Calu3 (cell line): ENCODE measurements at regions of chr7 and their contacts with region 1.

Region 1: GRCh38 chr7:45157653-45158401 is at the start of gene RAMP3:
- DNase-seq: no peak
- H3K4me3 Mint-ChIP-seq: no peak within 1 kb of the TSS
- H3K27ac Mint-ChIP-seq: no peak within 1 kb of the TSS
- H3K4me1 Mint-ChIP-seq: no peaks in the 10 kb centered on the region
- H3K27me3 Mint-ChIP-seq: peaks cover 71% of the 10 kb centered on the region
- CTCF ChIP-seq: no peak
- total RNA-seq, gene RAMP3: not detected in 2 replicates

Region 2: DNA sequence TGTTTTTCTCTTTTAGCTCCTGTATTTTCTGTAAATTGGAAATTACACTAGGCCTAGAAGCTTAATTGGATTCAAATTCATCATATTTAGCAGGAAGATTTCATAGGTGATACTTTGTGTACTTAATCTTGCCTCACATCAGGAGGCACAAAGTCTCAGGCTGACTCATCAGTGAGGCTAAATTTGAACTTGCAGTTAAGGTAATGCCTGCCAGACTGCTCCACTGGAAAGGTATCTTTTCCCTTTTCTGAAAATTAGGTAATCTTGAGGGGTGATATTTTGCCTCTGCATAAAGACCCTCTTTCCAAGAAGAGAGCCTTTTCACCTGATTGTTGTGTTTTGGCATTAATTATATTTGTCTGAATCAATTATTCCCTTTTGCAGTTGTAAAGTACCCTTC is 346.7 kb before region 1 on chr7:
- CTCF ChIA-PET with region 1: no interaction called
- intact Hi-C with region 1: no loop called
- DNase-seq: peak; percentile 45
- H3K4me3 Mint-ChIP-seq: no peak overlapping the region
- H3K27ac Mint-ChIP-seq: no peak overlapping the region
- H3K4me1 Mint-ChIP-seq: no peaks in the 10 kb centered on the region
- H3K27me3 Mint-ChIP-seq: no peaks in the 10 kb centered on the region
- CTCF ChIP-seq: no peak

Region 3: DNA sequence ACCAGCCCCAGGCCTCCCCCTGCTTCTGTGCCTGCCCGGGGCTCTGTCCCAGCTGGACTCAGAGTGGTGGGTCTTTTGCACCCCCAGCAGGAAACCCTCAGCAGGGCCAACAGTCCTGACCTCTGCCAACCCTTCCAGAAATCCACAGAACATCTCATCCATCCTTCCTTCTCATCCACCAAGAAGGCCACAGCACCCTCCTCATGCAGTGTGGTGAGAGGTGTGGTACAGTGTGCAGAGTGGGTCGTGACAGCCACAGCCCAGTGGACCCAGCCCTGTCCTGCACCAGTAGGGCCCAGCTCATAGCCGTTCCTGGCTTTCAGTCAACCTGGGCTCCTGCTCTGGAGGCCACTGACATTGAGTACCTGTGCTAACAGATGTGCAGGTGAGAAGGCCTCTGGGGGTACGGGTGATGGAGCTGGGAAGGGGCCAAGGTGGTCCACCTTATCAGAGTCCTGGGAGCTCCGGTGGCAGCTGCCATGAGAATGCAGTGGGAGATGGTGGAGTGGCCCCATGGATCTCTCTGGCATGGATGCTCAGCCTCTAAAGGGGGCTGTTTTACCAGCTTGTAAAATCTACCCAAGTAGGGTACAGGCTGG is 40.3 kb before region 1 on chr7:
- CTCF ChIA-PET with region 1: no interaction called
- intact Hi-C with region 1: no loop called
- DNase-seq: no peak
- H3K4me3 Mint-ChIP-seq: no peak overlapping the region
- H3K27ac Mint-ChIP-seq: no peak overlapping the region
- H3K4me1 Mint-ChIP-seq: no peaks in the 10 kb centered on the region
- H3K27me3 Mint-ChIP-seq: peaks cover 47% of the 10 kb centered on the region
- CTCF ChIP-seq: no peak

Region 4: DNA sequence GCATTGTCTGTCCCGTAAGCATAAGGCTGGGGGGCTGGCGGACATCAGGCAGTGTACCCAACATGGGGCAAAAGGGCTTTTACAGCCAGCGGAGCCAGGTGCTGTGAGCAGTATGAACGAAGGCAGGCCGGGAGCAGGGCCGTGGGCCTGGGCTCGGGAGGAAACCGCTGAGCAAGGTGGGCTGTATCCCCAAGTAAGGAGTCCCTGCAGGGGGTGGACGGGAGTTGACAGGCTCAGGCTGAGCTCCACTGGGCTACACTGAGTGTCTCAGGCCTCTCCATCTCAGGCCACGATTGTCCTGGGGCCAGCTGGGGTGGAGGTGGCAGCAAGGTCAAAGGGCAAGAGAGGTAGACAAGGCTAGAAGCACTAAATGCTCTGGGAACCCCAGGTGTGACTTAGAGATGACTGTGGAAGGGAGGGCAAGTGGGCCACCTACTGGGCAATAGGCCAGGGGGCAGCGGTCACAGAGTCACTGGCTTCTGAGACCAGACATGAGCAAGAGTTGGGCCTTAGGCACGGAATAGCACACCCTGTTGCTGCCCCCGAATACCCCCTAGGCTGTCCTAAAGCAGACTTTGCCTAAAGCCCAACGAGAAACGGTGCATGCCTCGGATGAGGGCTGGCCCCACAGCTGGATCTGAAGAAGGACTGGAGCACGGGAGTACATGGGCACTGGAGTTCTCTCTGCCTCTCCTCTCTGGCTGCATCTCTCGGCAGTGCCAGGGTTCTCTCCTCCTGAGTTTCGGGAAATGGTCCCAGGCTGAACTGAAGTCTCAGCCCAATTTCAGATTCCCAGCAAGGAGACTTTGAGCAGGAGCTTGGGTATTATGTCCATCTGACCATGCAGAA is 11.1 kb before region 1 on chr7:
- CTCF ChIA-PET with region 1: no interaction called
- intact Hi-C with region 1: no loop called
- DNase-seq: peak; percentile 29
- H3K4me3 Mint-ChIP-seq: no peak overlapping the region
- H3K27ac Mint-ChIP-seq: no peak overlapping the region
- H3K4me1 Mint-ChIP-seq: no peaks in the 10 kb centered on the region
- H3K27me3 Mint-ChIP-seq: peaks cover 75% of the 10 kb centered on the region
- CTCF ChIP-seq: no peak

Region 5: GRCh38 chr7:45178241-45179225 is 20.7 kb after region 1 on chr7:
- CTCF ChIA-PET with region 1: no interaction called
- intact Hi-C with region 1: loop called (anchors 1 kb)
- DNase-seq: peak; percentile 35
- H3K4me3 Mint-ChIP-seq: no peak overlapping the region
- H3K27ac Mint-ChIP-seq: no peak overlapping the region
- H3K4me1 Mint-ChIP-seq: no peaks in the 10 kb centered on the region
- H3K27me3 Mint-ChIP-seq: peaks cover 100% of the 10 kb centered on the region
- CTCF ChIP-seq: peak; percentile 17

Region 6: GRCh38 chr7:45259966-45260646 is 102.3 kb after region 1 on chr7:
- CTCF ChIA-PET with region 1: interaction called, 4 read pairs
- intact Hi-C with region 1: loop called (anchors 1 kb)
- DNase-seq: peak; percentile 82
- H3K4me3 Mint-ChIP-seq: no peak overlapping the region
- H3K27ac Mint-ChIP-seq: no peak overlapping the region
- H3K4me1 Mint-ChIP-seq: no peaks in the 10 kb centered on the region
- H3K27me3 Mint-ChIP-seq: peaks cover 21% of the 10 kb centered on the region
- CTCF ChIP-seq: peak; percentile 99

Region 7: GRCh38 chr7:45574521-45575500 is 417.0 kb after region 1 on chr7:
- CTCF ChIA-PET with region 1: no interaction called
- intact Hi-C with region 1: loop called (anchors 10 kb)
- DNase-seq: peak; percentile 74
- H3K4me3 Mint-ChIP-seq: peak overlapping the region; percentile 65
- H3K27ac Mint-ChIP-seq: no peak overlapping the region
- H3K4me1 Mint-ChIP-seq: no peaks in the 10 kb centered on the region
- H3K27me3 Mint-ChIP-seq: peaks cover 95% of the 10 kb centered on the region
- CTCF ChIP-seq: no peak